Activated CD4-positive, alpha-beta T cell treated with anti-CD3 and anti-CD28 coated beads, Interleukin-2, amount 10 ng/mL, durations not matched to agents 24 days and 14 days (primary cell): ENCODE measurements at regions of chr6 and their contacts with region 1.

Region 1: GRCh38 chr6:132813173-132813856 is 1.1 kb upstream of the RPS12 start:
- DNase-seq: peak; percentile 80
- H3K4me3 Mint-ChIP-seq: peak overlapping the region; percentile 99
- H3K27ac Mint-ChIP-seq: peak overlapping the region; percentile 100
- H3K4me1 Mint-ChIP-seq: peaks cover 41% of the 10 kb centered on the region
- H3K27me3 Mint-ChIP-seq: peaks cover 16% of the 10 kb centered on the region

Region 2: GRCh38 chr6:131627724-131628682 is 1185.3 kb before region 1 on chr6 and contains the start of gene MED23:
- intact Hi-C with region 1: loop called (anchors 5 kb)
- DNase-seq: peak; percentile 99
- H3K4me3 Mint-ChIP-seq: peak within 1 kb of the TSS; percentile 97
- H3K27ac Mint-ChIP-seq: peak within 1 kb of the TSS; percentile 92
- H3K4me1 Mint-ChIP-seq: peaks cover 22% of the 10 kb centered on the region
- H3K27me3 Mint-ChIP-seq: no peaks in the 10 kb centered on the region
- total RNA-seq, gene MED23: 29.2 and 30.2 TPM in 2 replicates

Region 3: GRCh38 chr6:132512638-132513632 is 300.4 kb before region 1 on chr6 and contains the start of gene STX7:
- intact Hi-C with region 1: loop called (anchors 2 kb)
- DNase-seq: peak; percentile 96
- H3K4me3 Mint-ChIP-seq: peak within 1 kb of the TSS; percentile 96
- H3K27ac Mint-ChIP-seq: peak within 1 kb of the TSS; percentile 94
- H3K4me1 Mint-ChIP-seq: peaks cover 26% of the 10 kb centered on the region
- H3K27me3 Mint-ChIP-seq: peaks cover 21% of the 10 kb centered on the region
- total RNA-seq, gene STX7: 16.3 and 21.1 TPM in 2 replicates

Region 4: DNA sequence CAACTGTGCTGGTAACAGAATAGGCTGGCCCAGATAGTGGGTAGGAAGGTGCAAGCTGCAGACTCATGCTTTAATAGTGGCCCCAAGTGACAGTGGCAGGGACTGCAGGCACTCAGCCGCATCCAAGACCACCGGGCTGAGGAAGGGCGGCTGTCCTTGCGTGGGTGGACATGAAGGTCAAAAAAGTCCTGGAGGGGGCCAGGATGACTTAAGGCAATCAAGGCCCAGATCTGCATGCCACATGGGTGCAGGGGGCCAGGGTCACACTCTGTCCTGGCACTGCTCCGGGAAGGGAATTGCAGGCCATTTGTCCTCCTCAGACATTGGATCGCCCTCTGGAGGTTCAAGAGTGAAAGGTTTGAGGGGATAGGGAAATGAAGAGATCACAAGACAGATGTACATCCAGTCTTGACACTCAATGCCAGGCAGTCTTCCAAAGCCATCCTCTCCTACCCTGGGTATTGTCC is 45.2 kb before region 1 on chr6:
- intact Hi-C with region 1: loop called (anchors 2 kb)
- DNase-seq: peak; percentile 69
- H3K4me3 Mint-ChIP-seq: no peak overlapping the region
- H3K27ac Mint-ChIP-seq: no peak overlapping the region
- H3K4me1 Mint-ChIP-seq: peaks cover 17% of the 10 kb centered on the region
- H3K27me3 Mint-ChIP-seq: no peaks in the 10 kb centered on the region

Region 5: DNA sequence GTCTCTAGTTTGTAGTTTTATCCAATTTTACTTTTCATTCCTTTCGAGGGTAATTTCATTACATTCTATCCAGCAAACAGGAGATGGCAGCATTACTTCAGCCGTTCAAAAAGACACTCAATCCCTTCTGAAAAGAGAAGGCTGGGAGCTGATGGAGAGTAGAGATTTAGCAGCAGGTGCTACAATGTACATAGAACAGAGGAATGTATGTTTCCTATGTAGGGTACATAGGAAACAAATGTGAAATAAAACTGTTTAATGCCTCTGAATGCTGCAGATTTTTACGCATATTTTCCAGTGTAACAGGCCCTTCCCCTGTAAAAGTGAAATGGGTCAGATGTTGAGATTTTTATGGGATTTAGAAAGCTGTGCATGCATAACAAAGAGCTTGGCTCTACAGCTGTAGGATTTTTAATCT is 17.0 kb after region 1 on chr6:
- intact Hi-C with region 1: no loop called
- DNase-seq: no peak
- H3K4me3 Mint-ChIP-seq: no peak overlapping the region
- H3K27ac Mint-ChIP-seq: no peak overlapping the region
- H3K4me1 Mint-ChIP-seq: no peaks in the 10 kb centered on the region
- H3K27me3 Mint-ChIP-seq: peaks cover 12% of the 10 kb centered on the region

Region 6: GRCh38 chr6:132872923-132873322 is 59.6 kb after region 1 on chr6:
- intact Hi-C with region 1: loop called (anchors 2 kb)
- DNase-seq: no peak
- H3K4me3 Mint-ChIP-seq: no peak overlapping the region
- H3K27ac Mint-ChIP-seq: no peak overlapping the region
- H3K4me1 Mint-ChIP-seq: peaks cover 2% of the 10 kb centered on the region
- H3K27me3 Mint-ChIP-seq: peaks cover 34% of the 10 kb centered on the region